Activated CD4-positive, alpha-beta T cell treated with anti-CD3 and anti-CD28 coated beads for 36 hours (primary cell): ENCODE measurements at regions of chr22 and their contacts with region 1.

Region 1: GRCh38 chr22:39520054-39520891 is at the start of gene ATF4:
- DNase-seq: peak; percentile 98
- ATAC-seq: peak; percentile 90
- H3K4me3 Mint-ChIP-seq: peak within 1 kb of the TSS; percentile 86
- H3K27ac Mint-ChIP-seq: peak within 1 kb of the TSS; percentile 99
- H3K4me1 Mint-ChIP-seq: peaks cover 67% of the 10 kb centered on the region
- H3K27me3 Mint-ChIP-seq: no peaks in the 10 kb centered on the region
- total RNA-seq, gene ATF4: 580 to 680 TPM

Region 2: DNA sequence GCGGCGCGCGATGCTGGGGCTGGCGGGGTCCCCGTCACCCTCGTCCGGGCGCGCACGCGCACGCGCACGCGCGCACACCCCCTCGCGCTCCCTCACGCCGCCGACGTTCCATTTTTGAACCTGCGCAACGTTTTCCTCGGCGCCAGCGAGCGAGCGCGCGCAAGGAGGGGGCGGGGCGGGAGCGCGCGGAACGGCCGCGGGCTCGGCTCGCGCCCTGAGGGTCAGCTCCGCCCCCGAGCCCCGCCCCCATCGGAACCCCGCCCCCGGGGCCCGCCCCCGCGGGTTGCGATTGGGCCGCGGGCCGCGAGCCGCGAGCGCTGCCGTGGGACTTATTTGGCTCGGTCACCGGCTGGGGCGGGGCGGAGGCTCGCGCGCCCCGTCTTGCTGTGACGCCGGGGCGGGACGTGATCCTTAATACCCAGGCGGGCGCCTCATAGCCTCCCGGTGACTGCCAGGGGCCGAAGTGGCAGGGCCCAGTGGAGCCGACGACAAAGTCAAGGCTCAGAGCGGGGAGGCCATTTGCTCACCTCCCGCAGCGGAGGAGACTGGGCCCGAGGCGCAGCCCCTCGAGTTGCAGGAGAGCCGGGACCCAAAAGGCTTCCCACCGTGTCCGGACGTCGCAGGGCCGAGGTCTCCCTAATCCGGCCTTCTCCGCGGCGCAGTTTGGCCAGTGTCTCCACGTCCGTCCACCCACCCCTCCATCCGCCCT is 367.6 kb before region 1 on chr22 and contains the start of gene CBX7:
- CTCF ChIA-PET with region 1: no interaction called
- POLR2A ChIA-PET with region 1: no interaction called
- intact Hi-C with region 1: loop called in 1 of 2 experiments (anchors 5 kb)
- DNase-seq: peak; percentile 95
- ATAC-seq: peak; percentile 83
- H3K4me3 Mint-ChIP-seq: peak within 1 kb of the TSS; percentile 76
- H3K27ac Mint-ChIP-seq: peak within 1 kb of the TSS; percentile 72
- H3K4me1 Mint-ChIP-seq: peaks cover 40% of the 10 kb centered on the region
- H3K27me3 Mint-ChIP-seq: peaks cover 13% of the 10 kb centered on the region
- total RNA-seq, gene CBX7: 19.9 to 20.3 TPM

Region 3: DNA sequence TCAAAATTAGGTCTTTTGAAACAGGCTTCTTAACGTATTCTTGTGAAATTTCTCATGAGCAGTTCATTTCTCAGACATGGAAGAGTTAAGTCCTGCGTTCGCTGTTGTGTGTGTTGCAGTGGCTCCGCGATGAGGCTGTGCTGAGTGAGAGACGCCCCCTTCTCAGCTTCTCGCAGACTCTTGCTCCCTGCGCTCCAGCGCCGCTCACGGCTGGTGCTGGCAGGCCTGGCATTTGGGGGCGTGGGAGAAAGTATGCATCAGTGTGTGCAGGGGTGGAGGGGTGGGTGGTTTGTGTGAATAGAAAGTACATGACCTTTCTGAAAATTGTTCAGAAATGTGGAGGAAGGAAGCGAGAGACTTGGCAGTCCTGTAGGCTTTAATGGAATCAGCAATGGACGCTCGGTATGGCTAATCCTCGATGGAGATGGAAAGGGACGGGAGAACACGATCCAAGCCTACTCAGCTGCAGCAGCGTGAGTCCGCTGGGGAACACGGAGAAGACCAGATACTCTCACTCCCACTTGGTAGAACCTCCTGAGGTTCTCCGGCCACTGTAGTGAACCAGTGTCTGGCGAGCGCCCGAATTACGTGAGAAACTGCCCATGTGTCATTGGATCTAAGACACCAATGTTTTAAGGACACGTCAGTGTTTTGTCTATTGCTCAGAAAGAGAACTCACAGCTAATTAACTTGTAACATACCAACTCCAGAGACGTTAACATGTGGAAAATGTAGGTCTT is 114.8 kb before region 1 on chr22:
- CTCF ChIA-PET with region 1: no interaction called
- POLR2A ChIA-PET with region 1: no interaction called
- intact Hi-C with region 1: loop called in 1 of 2 experiments (anchors 10 kb)
- DNase-seq: peak; percentile 74
- ATAC-seq: peak; percentile 81
- H3K4me3 Mint-ChIP-seq: peak overlapping the region; percentile 13
- H3K27ac Mint-ChIP-seq: no peak overlapping the region
- H3K4me1 Mint-ChIP-seq: peaks cover 71% of the 10 kb centered on the region
- H3K27me3 Mint-ChIP-seq: no peaks in the 10 kb centered on the region

Region 4: DNA sequence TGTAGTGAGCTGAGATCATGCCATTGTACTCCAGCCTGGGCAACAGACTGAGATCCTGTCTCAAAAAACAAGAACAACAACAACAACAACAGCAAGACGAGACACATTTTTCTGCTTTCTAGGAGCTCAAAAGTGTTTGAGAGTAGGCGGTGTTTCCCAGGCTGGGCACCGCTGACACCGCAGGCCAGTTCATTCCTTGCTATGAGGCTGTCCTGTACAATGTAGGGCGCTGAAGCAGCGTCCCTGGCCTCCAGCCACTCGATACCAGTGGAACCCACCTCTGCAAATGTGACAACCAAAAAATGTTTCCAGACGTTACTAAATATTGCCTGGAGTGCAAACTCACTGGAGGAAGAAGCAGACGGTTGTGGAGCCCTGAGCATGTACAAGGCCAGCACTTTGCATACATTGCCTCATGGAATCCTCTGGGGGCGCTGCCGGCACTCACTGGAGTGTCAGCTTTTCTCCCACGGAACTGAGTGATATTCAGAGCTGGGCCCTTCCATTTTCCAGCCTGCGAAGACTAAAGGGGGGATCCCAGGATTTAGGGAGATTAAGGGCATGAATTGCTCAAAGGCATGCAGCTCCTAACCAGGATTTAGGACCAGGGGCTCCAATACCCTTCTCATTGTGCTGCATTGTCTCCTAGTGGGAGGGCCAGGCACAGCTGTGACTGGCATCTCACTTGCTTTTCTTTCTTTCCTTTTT is 24.0 kb before region 1 on chr22:
- CTCF ChIA-PET with region 1: interaction called, 27 read pairs
- POLR2A ChIA-PET with region 1: interaction called, 6 read pairs
- intact Hi-C with region 1: no loop called
- DNase-seq: peak; percentile 85
- ATAC-seq: peak; percentile 89
- H3K4me3 Mint-ChIP-seq: no peak overlapping the region
- H3K27ac Mint-ChIP-seq: no peak overlapping the region
- H3K4me1 Mint-ChIP-seq: peaks cover 13% of the 10 kb centered on the region
- H3K27me3 Mint-ChIP-seq: no peaks in the 10 kb centered on the region

Region 5: DNA sequence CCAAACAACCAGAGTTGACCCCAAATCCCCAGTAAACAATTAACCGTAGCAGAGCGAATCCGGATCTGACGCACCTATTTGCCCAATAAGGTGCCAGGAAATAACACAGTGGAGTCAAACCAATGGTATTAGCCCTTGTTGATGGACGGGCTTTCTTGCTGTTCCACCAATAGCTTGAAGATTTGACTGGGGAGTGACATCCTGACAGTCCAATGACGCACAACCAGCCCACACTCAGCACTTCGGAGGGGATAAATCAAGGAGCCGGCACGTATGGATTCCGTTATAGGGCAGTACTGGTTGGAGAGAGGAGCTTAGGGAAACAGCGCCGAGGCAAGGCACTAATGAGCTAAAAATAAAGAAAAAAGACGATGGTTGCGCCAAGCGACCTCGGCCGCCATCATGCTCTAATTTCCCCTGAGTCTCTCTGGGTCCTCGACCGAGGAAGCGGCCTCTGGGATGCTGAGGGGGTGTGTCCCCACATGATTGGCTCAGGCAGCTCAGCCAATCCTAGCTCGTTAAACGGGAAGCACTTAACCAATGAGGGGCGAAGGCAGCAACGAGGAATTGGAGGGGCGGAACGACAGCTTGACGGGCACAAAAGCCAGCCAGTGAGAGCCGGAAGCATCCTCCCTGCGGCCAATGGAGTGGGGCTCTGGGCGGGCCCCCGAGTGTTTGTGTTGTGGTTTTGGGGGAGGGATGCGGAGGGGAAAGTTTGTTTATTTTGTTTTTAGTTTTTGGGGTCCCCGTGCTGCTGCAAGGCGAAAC is 524.0 kb after region 1 on chr22:
- CTCF ChIA-PET with region 1: no interaction called
- POLR2A ChIA-PET with region 1: interaction called, 6 read pairs
- intact Hi-C with region 1: loop called in 1 of 2 experiments (anchors 1 kb)
- DNase-seq: peak; percentile 98
- ATAC-seq: peak; percentile 91
- H3K4me3 Mint-ChIP-seq: peak overlapping the region; percentile 87
- H3K27ac Mint-ChIP-seq: peak overlapping the region; percentile 99
- H3K4me1 Mint-ChIP-seq: peaks cover 24% of the 10 kb centered on the region
- H3K27me3 Mint-ChIP-seq: peaks cover 2% of the 10 kb centered on the region